H1 (cell line): ENCODE measurements at regions of chrX and their contacts with region 1.

Region 1: GRCh38 chrX:74614093-74614909 is at the start of gene RLIM:
- DNase-seq: peak; percentile 77 to 78
- H3K4me3 ChIP-seq: peak within 1 kb of the TSS; percentile 86 to 98 (median 87)
- H3K27ac ChIP-seq: peak within 1 kb of the TSS; percentile 94
- H3K4me1 ChIP-seq: no peaks in the 10 kb centered on the region
- H3K27me3 ChIP-seq: no peaks in the 10 kb centered on the region
- CTCF ChIP-seq: no peak
- EP300 ChIP-seq: peak in 1 of 2 experiments; percentile 24; a peak in 1 of 3 replicates
- POLR2A ChIP-seq: peak; percentile 53 to 69
- RAD21 ChIP-seq: no peak
- total RNA-seq, gene RLIM: 32.9 and 34.6 TPM in 2 replicates

Region 2: DNA sequence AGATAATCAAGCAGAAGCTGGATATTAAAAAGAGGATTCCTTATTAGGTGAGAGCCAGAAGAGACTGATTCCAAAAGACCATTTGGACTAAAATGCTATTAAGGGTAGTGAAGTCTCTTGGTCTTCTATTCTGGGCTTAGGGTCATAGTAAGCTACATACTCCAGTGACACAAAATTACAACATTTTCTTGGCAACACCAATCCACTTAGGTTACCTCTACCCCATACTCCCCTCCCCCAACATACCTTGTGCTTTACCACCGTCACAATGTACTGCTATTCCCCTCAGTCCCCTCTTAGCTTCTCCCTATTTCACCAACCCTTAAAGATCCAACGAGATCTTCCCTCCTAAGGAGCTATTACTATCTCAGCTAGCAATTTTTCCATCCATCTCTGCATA is 11.3 kb before region 1 on chrX:
- CTCF ChIA-PET with region 1: no interaction called
- POLR2A ChIA-PET with region 1: interaction called, 31 read pairs
- DNase-seq: no peak
- H3K4me3 ChIP-seq: no peak overlapping the region
- H3K27ac ChIP-seq: no peak overlapping the region
- H3K4me1 ChIP-seq: no peaks in the 10 kb centered on the region; a peak in 1 of 7 replicates
- H3K27me3 ChIP-seq: no peaks in the 10 kb centered on the region
- CTCF ChIP-seq: no peak
- EP300 ChIP-seq: no peak
- POLR2A ChIP-seq: peak in 1 of 2 experiments; percentile 32; a peak in 1 of 3 replicates
- RAD21 ChIP-seq: no peak